ENCODE measurements at regions of chr1 and their contacts with region 1.

Region 1: DNA sequence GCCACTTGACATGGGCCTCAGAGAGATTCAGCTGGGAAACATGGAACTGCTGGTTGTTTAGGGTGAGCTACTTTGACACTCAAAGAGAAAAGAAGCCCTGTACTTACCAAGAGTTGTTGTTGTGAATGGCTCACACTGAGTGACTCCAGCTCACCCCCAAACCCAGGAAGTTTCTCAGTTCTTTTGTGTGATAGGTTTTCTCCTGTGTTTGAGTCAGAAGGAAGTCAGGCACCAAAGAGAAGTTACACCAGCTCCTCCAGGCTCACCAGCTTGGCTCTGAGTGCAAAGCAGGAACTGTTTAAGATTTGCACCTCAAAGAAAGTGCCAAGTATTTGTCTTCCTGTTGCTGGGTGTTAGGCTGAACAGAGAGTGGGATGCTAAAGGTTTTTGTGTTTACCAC is 111.2 kb upstream of the PROX1 start:
- DNase-seq: peak in 2 of 9 donors; percentile 12 to 18
- ATAC-seq: no peak
- H3K4me3 ChIP-seq: no peak overlapping the region
- H3K4me3 Mint-ChIP-seq: peak overlapping the region in 5 of 10 donors; percentile 1 to 29 (median 6)
- H3K27ac ChIP-seq: no peak overlapping the region
- H3K27ac Mint-ChIP-seq: peak overlapping the region in 7 of 9 donors; percentile 19 to 77 (median 61)
- H3K4me1 ChIP-seq: peaks cover 0 to 15% of the 10 kb centered on the region in 2 donors
- H3K4me1 Mint-ChIP-seq: peaks cover 0 to 45% (median 22%) of the 10 kb centered on the region in 7 donors
- H3K27me3 ChIP-seq: no peaks in the 10 kb centered on the region
- H3K27me3 Mint-ChIP-seq: no peaks in the 10 kb centered on the region

Region 2: GRCh38 chr1:212545941-212546635 is 1330.4 kb before region 1 on chr1:
- CTCF ChIA-PET with region 1: no interaction called
- POLR2A ChIA-PET with region 1: no interaction called
- intact Hi-C with region 1: no loop called
- DNase-seq: no peak
- ATAC-seq: peak; percentile 50
- H3K4me3 ChIP-seq: no peak overlapping the region
- H3K4me3 Mint-ChIP-seq: no peak overlapping the region
- H3K27ac ChIP-seq: no peak overlapping the region
- H3K27ac Mint-ChIP-seq: no peak overlapping the region
- H3K4me1 ChIP-seq: no peaks in the 10 kb centered on the region
- H3K4me1 Mint-ChIP-seq: peaks cover 0 to 2% (median 0%) of the 10 kb centered on the region in 7 donors
- H3K27me3 ChIP-seq: no peaks in the 10 kb centered on the region
- H3K27me3 Mint-ChIP-seq: peaks cover 7 to 55% (median 18%) of the 10 kb centered on the region in 5 donors

Region 3: GRCh38 chr1:213783893-213784292 is 92.6 kb before region 1 on chr1:
- CTCF ChIA-PET with region 1: no interaction called
- POLR2A ChIA-PET with region 1: no interaction called
- intact Hi-C with region 1: loop called in 1 of 2 experiments (anchors 5 kb)
- DNase-seq: peak in 7 of 9 donors; percentile 24 to 63 (median 52)
- ATAC-seq: peak; percentile 70
- H3K4me3 ChIP-seq: no peak overlapping the region
- H3K4me3 Mint-ChIP-seq: peak overlapping the region in 9 of 10 donors; percentile 39 to 81 (median 70)
- H3K27ac ChIP-seq: no peak overlapping the region
- H3K27ac Mint-ChIP-seq: peak overlapping the region in 6 of 9 donors; percentile 4 to 84 (median 48)
- H3K4me1 ChIP-seq: peaks cover 0 to 20% of the 10 kb centered on the region in 2 donors
- H3K4me1 Mint-ChIP-seq: peaks cover 0 to 42% (median 39%) of the 10 kb centered on the region in 7 donors
- H3K27me3 ChIP-seq: no peaks in the 10 kb centered on the region
- H3K27me3 Mint-ChIP-seq: peaks cover 6 to 17% (median 8%) of the 10 kb centered on the region in 5 donors

Region 4: DNA sequence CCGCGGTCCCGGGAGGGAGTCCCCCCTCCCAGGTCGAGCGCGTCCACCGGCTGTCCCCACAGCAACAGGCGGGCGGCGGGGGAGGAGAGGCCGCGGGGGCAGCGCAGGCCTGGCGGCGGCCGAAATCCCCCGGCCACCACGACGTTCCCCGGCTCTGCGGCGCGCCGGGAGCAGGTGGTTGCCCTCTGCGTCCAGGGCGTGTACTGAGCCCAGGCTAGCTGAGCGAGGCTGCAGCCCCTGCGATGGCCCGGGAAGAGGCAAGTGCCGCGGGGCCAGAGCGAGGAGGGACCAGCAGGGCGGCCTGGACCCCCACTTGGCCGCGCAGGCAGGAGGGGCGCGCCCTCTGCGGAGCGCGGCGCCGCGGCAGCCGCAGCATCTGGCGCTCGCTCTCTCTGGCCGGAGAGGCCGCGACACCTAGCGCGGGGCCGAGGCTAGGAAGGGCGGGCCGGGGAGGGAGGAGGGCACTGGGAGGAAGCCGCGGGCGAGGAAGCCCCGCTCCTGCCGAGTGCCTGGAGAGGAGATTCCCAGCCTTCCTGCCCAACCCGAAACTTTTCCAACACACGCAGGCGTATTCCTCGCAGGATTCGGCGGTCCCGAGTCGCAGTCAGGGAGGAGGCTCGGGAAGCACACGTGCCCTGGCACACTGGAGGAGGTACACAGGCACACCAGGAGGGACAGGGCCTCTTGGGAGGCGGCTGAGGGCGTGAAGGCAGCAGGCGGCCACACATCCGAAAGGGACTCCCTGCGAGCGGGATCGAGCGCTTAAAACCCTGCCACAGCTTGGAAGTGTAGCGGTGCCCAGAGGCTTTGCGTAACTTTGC is 106.4 kb after region 1 on chr1:
- CTCF ChIA-PET with region 1: no interaction called
- POLR2A ChIA-PET with region 1: no interaction called
- intact Hi-C with region 1: loop called in 1 of 2 experiments (anchors 5 kb)
- DNase-seq: peak in 1 of 9 donors; percentile 13
- ATAC-seq: no peak
- H3K4me3 ChIP-seq: no peak overlapping the region
- H3K4me3 Mint-ChIP-seq: peak overlapping the region in 8 of 10 donors; percentile 34 to 85 (median 53)
- H3K27ac ChIP-seq: no peak overlapping the region
- H3K27ac Mint-ChIP-seq: no peak overlapping the region
- H3K4me1 ChIP-seq: peaks cover 0 to 34% of the 10 kb centered on the region in 2 donors
- H3K4me1 Mint-ChIP-seq: peaks cover 20 to 81% (median 63%) of the 10 kb centered on the region in 7 donors
- H3K27me3 ChIP-seq: peaks cover 3 to 54% of the 10 kb centered on the region in 2 donors
- H3K27me3 Mint-ChIP-seq: peaks cover 80 to 92% (median 83%) of the 10 kb centered on the region in 5 donors